ENCODE measurements at regions of chr5 and their contacts with region 1.

Region 1: DNA sequence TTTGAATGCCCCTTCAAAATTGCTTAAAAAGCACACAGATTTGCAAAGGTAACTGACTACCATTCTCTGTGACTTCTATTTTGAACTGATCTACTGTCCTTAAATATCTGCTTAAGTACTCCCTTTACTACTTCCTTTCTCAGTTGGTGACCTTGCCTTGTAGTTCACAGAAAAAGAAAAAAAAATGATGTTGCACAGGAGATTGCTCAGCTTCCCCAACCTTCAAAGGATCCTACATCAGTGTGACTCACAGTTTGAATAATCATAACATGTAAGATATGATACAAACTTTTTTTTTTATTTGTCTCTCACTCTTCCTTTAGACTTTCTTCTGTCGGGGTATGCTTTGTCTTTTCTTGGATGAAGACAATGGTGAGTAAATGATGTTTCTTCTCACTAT is 1029.6 kb downstream of the CDH12 start:
- DNase-seq: no peak
- H3K4me3 Mint-ChIP-seq: no peak overlapping the region
- H3K27ac Mint-ChIP-seq: no peak overlapping the region
- H3K4me1 Mint-ChIP-seq: no peaks in the 10 kb centered on the region
- H3K27me3 Mint-ChIP-seq: peaks cover 21% of the 10 kb centered on the region
- CTCF ChIP-seq: no peak

Region 2: GRCh38 chr5:21739096-21739495 is 84.5 kb before region 1 on chr5:
- CTCF ChIA-PET with region 1: no interaction called
- intact Hi-C with region 1: no loop called
- DNase-seq: no peak
- H3K4me3 Mint-ChIP-seq: no peak overlapping the region
- H3K27ac Mint-ChIP-seq: no peak overlapping the region
- H3K4me1 Mint-ChIP-seq: no peaks in the 10 kb centered on the region
- H3K27me3 Mint-ChIP-seq: no peaks in the 10 kb centered on the region
- CTCF ChIP-seq: no peak

Region 3: GRCh38 chr5:22223079-22223478 is 399.5 kb after region 1 on chr5:
- CTCF ChIA-PET with region 1: no interaction called
- intact Hi-C with region 1: loop called (anchors 5 kb)
- DNase-seq: no peak
- H3K4me3 Mint-ChIP-seq: no peak overlapping the region
- H3K27ac Mint-ChIP-seq: no peak overlapping the region
- H3K4me1 Mint-ChIP-seq: no peaks in the 10 kb centered on the region
- H3K27me3 Mint-ChIP-seq: no peaks in the 10 kb centered on the region
- CTCF ChIP-seq: no peak